PC-3 (cell line): ENCODE measurements at regions of chrX and their contacts with region 1.

Region 1: GRCh38 chrX:139392507-139392906 is 138.0 kb upstream of the F9 start:
- DNase-seq: no peak
- ATAC-seq: no peak
- H3K4me3 ChIP-seq: no peak overlapping the region
- H3K27ac ChIP-seq: no peak overlapping the region
- H3K4me1 ChIP-seq: no peaks in the 10 kb centered on the region
- H3K27me3 ChIP-seq: no peaks in the 10 kb centered on the region
- CTCF ChIP-seq: no peak

Region 2: GRCh38 chrX:138254001-138254400 is 1138.5 kb before region 1 on chrX:
- CTCF ChIA-PET with region 1: no interaction called
- POLR2A ChIA-PET with region 1: no interaction called
- intact Hi-C with region 1: loop called (anchors 10 kb)
- DNase-seq: no peak
- ATAC-seq: no peak
- H3K4me3 ChIP-seq: no peak overlapping the region
- H3K27ac ChIP-seq: no peak overlapping the region
- H3K4me1 ChIP-seq: no peaks in the 10 kb centered on the region
- H3K27me3 ChIP-seq: no peaks in the 10 kb centered on the region
- CTCF ChIP-seq: no peak

Region 3: DNA sequence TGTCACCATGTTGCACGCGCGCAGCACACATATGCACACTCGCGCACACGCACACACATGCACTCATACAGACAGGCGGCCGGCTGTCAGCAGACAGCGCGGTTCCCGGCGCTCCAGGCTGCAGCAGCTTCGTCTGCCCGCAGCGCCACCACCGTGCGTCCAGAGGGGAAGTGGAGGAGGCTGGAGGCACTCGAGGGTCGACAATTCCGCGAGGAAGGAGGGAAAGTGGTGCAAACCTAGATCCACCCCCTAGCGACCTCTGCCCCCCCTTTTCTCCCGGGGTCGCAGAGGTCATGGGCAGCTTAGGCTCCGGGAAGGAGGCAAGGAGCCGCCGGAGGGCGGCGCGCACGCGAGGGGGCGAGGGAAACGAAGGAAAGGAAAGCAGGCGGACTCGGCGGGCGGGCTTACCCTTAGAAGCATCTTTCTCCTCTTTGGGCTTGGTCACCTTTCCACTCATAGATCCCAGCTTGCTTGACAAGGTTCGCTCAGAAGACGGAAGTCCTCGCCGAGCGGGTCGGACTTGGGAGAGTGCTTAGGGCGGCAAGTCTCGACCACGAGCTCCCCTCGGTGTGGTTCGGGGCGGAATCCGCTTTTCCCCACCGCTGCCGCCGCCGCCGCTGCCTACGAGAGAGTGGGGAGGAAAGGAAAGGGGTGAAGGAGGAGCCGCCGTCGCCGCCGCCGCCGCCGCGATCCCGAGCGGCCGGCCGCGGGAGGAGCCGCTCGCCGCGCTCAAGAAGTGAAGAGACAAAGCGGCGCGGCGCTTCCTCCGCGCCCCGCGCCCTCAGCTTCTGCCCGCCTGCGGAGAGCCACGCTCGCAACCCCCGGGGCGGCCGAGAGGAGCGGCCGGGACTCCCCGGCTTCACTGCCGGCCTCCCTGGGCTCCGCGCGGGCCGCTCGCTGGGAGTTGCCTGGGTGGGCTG is 188.6 kb before region 1 on chrX:
- CTCF ChIA-PET with region 1: no interaction called
- POLR2A ChIA-PET with region 1: no interaction called
- intact Hi-C with region 1: no loop called
- DNase-seq: peak; percentile 26
- ATAC-seq: peak; percentile 18
- H3K4me3 ChIP-seq: peak overlapping the region; percentile 75
- H3K27ac ChIP-seq: no peak overlapping the region
- H3K4me1 ChIP-seq: peaks cover 34% of the 10 kb centered on the region
- H3K27me3 ChIP-seq: no peaks in the 10 kb centered on the region
- CTCF ChIP-seq: peak; percentile 41